ENCODE measurements at regions of chr1 and their contacts with region 1.

Region 1: DNA sequence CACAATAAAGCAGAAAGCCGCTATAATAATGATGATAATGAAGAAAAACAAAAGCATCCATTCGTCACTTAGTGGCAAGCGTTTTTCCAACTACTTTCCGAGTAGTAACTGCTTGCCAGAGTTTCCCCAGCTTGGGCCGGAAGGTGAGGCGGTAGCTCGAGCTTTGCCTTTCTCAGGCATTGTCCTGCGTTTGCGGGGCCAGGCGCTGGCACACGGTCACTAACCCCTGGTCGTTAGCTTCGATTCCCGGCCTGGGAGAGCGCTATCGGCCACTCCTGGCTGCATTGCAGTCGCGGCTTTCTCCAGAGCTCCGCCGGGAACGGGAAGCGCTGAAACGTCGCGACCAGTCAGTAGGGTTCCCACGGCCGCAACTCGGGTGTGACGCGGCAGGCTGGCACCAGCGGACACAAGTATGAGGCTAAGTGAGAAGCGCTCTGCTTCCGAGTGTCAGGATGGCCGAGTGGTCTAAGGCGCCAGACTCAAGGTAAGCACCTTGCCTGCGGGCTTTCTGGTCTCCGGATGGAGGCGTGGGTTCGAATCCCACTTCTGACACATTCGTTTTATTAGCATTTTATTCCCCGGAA is 14.6 kb upstream of the ZNF692 start:
- DNase-seq: peak; percentile 92
- ATAC-seq: peak; percentile 92
- H3K4me3 ChIP-seq: peak overlapping the region; percentile 60 to 87 (median 85)
- H3K27ac ChIP-seq: peak overlapping the region; percentile 95
- H3K4me1 ChIP-seq: peaks cover 9% of the 10 kb centered on the region
- H3K27me3 ChIP-seq: no peaks in the 10 kb centered on the region; a peak in 1 of 5 replicates
- CTCF ChIP-seq: peak; percentile 26; the same call in 1 of the 2 replicates
- EP300 ChIP-seq: no peak; a peak in 1 of 4 replicates
- POLR2A ChIP-seq: peak; percentile 28 to 72; a peak in 3 of 4 replicates
- RAD21 ChIP-seq: peak; percentile 32; the same call in 1 of the 2 replicates

Region 2: DNA sequence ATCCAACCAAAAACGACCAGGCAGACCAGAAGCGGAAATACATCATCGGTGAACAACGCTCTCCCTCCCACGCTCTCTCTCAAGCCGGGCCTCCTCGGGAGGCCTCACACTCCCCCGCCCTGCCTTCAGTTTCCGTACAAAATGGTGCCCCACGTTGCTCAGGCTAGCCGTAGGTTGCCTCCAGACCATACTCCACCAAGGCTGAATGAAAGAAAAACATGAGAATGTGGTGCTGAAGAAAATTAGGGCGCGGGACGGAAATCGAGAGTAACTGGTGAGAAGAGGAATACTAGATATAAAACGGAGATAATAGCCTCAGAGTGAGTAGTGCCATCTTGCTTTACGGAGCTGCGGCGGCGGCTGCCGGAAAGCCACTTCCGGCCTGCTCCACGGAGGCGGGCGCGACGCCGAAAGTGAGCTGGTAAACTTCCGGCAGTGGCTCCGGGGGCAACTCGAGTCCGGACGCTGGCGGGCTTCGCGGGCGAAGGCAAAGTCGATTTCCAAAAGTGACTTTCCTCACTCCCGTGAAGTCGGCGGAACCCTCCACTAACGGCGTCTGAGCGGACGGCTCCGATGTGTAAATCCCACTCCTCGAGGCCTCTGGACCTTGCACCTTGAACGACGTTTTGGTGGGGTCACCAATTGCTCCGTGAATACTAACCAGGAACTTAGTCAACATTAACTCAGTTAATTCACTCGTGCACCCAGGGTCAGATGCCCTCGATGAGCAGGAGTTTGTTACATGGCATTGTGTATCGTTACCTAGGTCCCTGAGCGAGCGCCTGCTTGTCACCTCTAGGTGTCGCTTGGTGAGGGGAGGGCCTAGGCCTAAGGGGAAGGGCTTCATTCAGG is 47.4 kb before region 1 on chr1 and contains the start of gene SH3BP5L:
- CTCF ChIA-PET with region 1: no interaction called
- POLR2A ChIA-PET with region 1: interaction called, 20 read pairs
- in situ Hi-C with region 1: no loop called
- intact Hi-C with region 1: loop called (anchors 2 kb)
- DNase-seq: peak; percentile 93
- ATAC-seq: peak; percentile 94
- H3K4me3 ChIP-seq: peak within 1 kb of the TSS; percentile 71 to 92 (median 81)
- H3K27ac ChIP-seq: peak within 1 kb of the TSS; percentile 99
- H3K4me1 ChIP-seq: peaks cover 69% of the 10 kb centered on the region
- H3K27me3 ChIP-seq: no peaks in the 10 kb centered on the region; a peak in 1 of 5 replicates
- CTCF ChIP-seq: peak; percentile 88
- EP300 ChIP-seq: peak in 1 of 2 experiments; percentile 5; a peak in 2 of 4 replicates
- POLR2A ChIP-seq: peak; percentile 79 to 90
- RAD21 ChIP-seq: 0 out of 2 replicates have a peak, but pooled peaks have one; percentile 28
- total RNA-seq, gene SH3BP5L: 10.2 and 14.9 TPM in 2 replicates

Region 3: GRCh38 chr1:248858891-248859889 is 14.3 kb before region 1 on chr1 and contains the start of gene ZNF692:
- CTCF ChIA-PET with region 1: interaction called, 3 read pairs
- POLR2A ChIA-PET with region 1: interaction called, 44 read pairs
- in situ Hi-C with region 1: no loop called
- intact Hi-C with region 1: loop called (anchors 1 kb)
- DNase-seq: peak; percentile 93
- ATAC-seq: peak; percentile 77
- H3K4me3 ChIP-seq: peak within 1 kb of the TSS; percentile 62 to 87 (median 83)
- H3K27ac ChIP-seq: peak within 1 kb of the TSS; percentile 79
- H3K4me1 ChIP-seq: peaks cover 51% of the 10 kb centered on the region
- H3K27me3 ChIP-seq: no peaks in the 10 kb centered on the region; a peak in 1 of 5 replicates
- CTCF ChIP-seq: no peak
- EP300 ChIP-seq: no peak
- POLR2A ChIP-seq: no peak; a peak in 1 of 4 replicates
- RAD21 ChIP-seq: no peak
- total RNA-seq, gene ZNF692: 6.2 and 27.3 TPM in 2 replicates

Region 4: GRCh38 chr1:248906009-248906752 is 32.7 kb after region 1 on chr1 and contains the start of gene PGBD2:
- CTCF ChIA-PET with region 1: no interaction called
- POLR2A ChIA-PET with region 1: interaction called, 19 read pairs
- in situ Hi-C with region 1: no loop called
- intact Hi-C with region 1: loop called (anchors 1 kb)
- DNase-seq: peak; percentile 81
- ATAC-seq: peak; percentile 97
- H3K4me3 ChIP-seq: peak within 1 kb of the TSS; percentile 84 to 90 (median 89)
- H3K27ac ChIP-seq: peak within 1 kb of the TSS; percentile 97
- H3K4me1 ChIP-seq: peaks cover 25% of the 10 kb centered on the region
- H3K27me3 ChIP-seq: no peaks in the 10 kb centered on the region; a peak in 1 of 5 replicates
- CTCF ChIP-seq: peak; percentile 89
- EP300 ChIP-seq: no peak; a peak in 1 of 4 replicates
- POLR2A ChIP-seq: peak; percentile 95 to 97
- RAD21 ChIP-seq: peak; percentile 78
- total RNA-seq, gene PGBD2: 7.4 and 7.9 TPM in 2 replicates